K562 (cell line): ENCODE measurements at regions of chr14 and their contacts with region 1.

Region 1: GRCh38 chr14:68727315-68728047 is 65.4 kb downstream of the ZFP36L1 start:
- DNase-seq: peak; percentile 26 to 80 (median 53)
- ATAC-seq: peak; percentile 94
- H3K4me3 ChIP-seq: no peak overlapping the region
- H3K27ac ChIP-seq: peak overlapping the region; percentile 68
- H3K4me1 ChIP-seq: peaks cover 5 to 37% of the 10 kb centered on the region in 2 experiments; a peak in 4 of 5 replicates
- H3K27me3 ChIP-seq: no peaks in the 10 kb centered on the region
- CTCF ChIP-seq: no peak
- EP300 ChIP-seq: peak; percentile 37; the same call in 1 of the 2 replicates
- POLR2A ChIP-seq: no peak
- RAD21 ChIP-seq: no peak

Region 2: GRCh38 chr14:68749487-68750475 is 22.3 kb after region 1 on chr14:
- CTCF ChIA-PET with region 1: no interaction called
- POLR2A ChIA-PET with region 1: interaction called, 12 read pairs
- in situ Hi-C with region 1: no loop called
- intact Hi-C with region 1: no loop called
- DNase-seq: peak in 3 of 4 experiments; percentile 25 to 68 (median 36)
- ATAC-seq: peak; percentile 81
- H3K4me3 ChIP-seq: no peak overlapping the region
- H3K27ac ChIP-seq: peak overlapping the region; percentile 60; the same call in 2 of the 3 replicates
- H3K4me1 ChIP-seq: peaks cover 6 to 43% of the 10 kb centered on the region in 2 experiments; a peak in 4 of 5 replicates
- H3K27me3 ChIP-seq: no peaks in the 10 kb centered on the region
- CTCF ChIP-seq: no peak
- EP300 ChIP-seq: peak; percentile 75
- POLR2A ChIP-seq: no peak
- RAD21 ChIP-seq: no peak

Region 3: DNA sequence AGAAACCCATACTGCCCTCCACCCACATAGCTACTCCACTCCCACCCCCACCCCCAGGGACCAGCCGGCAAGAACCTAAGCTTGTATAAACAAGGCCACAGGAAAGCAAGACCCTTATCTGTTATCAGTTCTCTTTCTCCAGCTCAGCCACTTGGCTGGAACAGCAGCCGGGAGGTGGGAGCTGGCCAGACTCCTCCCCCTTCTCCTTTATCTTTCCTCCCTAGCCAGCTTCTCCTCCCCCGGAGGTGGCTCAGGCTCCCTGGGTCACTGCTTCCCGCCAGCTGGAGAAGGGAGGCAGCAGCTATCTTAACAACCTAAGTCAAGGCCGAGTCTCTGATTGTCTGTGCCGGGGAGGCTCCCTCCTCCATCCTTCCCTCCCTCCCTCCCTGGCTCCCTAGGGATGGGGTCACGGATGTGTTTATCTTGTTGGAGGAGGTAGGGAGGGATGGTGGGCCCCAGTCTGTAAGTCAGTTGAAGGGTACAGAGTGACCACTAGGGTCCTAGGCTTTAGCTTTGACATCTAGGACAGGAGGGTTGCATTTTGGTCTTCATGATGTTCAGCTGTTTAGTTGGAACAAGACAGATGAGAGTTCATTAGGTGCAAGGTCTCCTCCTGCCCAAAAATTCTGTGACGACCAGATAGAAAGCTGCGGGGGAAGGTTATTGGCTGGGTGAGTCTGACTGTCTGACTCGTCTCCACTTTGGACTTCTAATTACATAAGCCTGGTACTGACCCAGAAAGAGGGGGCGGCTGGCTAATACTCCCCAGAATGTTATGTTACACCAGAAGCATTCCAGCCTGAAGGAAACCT is 35.7 kb after region 1 on chr14:
- CTCF ChIA-PET with region 1: no interaction called
- POLR2A ChIA-PET with region 1: interaction called, 3 read pairs
- in situ Hi-C with region 1: loop called (anchors 5 kb)
- intact Hi-C with region 1: loop called (anchors 5 kb)
- DNase-seq: peak; percentile 93 to 95 (median 94)
- ATAC-seq: peak; percentile 88
- H3K4me3 ChIP-seq: no peak overlapping the region
- H3K27ac ChIP-seq: peak overlapping the region; percentile 28; the same call in 1 of the 3 replicates
- H3K4me1 ChIP-seq: peaks cover 28 to 55% of the 10 kb centered on the region in 2 experiments
- H3K27me3 ChIP-seq: no peaks in the 10 kb centered on the region
- CTCF ChIP-seq: no peak
- EP300 ChIP-seq: peak; percentile 85
- POLR2A ChIP-seq: no peak
- RAD21 ChIP-seq: peak in 1 of 2 experiments; percentile 26; a peak in 1 of 4 replicates

Region 4: DNA sequence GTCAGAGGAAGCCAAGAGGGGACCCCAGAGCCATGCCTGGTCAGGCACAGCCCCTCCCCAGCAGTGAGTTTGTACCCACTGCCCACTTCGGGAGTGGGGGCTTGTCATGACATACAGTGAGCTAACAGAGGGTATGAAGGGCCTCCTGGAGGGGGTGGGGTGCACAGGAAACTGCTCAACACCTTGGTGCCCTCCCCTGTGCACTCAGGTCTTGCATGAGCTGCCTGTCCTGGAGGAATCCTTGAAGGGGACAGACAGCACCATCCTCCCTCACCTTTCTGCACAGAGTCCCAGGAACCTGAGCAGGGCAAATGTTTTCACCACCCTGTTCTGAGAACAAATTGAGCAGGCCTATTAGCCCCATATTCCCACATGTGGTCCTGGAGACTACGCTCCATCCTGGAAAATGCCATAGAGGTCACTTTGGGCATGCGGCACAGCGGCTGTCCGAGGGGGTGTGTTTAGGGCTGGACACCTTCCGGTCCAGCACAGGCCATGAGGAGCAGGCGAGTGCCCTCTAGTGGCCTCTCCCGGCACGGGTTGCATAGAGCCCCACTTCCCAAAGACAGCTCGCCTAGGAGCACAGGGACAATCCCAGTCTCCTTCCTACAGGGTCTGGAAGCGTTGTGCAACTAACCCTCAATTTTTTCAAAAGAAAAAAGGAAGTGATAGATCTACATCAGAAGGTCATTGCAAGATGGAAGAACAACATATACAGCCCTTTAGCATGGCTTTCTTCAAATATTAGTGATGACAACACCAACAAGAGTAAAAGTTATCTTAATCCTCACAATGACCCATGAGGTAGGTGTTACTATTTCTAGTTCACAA is 97.3 kb after region 1 on chr14:
- CTCF ChIA-PET with region 1: no interaction called
- POLR2A ChIA-PET with region 1: no interaction called
- in situ Hi-C with region 1: no loop called
- intact Hi-C with region 1: no loop called
- DNase-seq: peak; percentile 80 to 87 (median 82)
- ATAC-seq: peak; percentile 98
- H3K4me3 ChIP-seq: no peak overlapping the region
- H3K27ac ChIP-seq: no peak overlapping the region
- H3K4me1 ChIP-seq: peaks cover 7 to 13% of the 10 kb centered on the region in 2 experiments; a peak in 4 of 5 replicates
- H3K27me3 ChIP-seq: no peaks in the 10 kb centered on the region
- CTCF ChIP-seq: peak; percentile 81 to 94 (median 84)
- EP300 ChIP-seq: peak; percentile 25; the same call in 1 of the 2 replicates
- POLR2A ChIP-seq: no peak
- RAD21 ChIP-seq: peak; percentile 58 to 81